Right ventricle myocardium inferior (tissue), 1 donor: ENCODE measurements at regions of chr5 and their contacts with region 1.

Region 1: DNA sequence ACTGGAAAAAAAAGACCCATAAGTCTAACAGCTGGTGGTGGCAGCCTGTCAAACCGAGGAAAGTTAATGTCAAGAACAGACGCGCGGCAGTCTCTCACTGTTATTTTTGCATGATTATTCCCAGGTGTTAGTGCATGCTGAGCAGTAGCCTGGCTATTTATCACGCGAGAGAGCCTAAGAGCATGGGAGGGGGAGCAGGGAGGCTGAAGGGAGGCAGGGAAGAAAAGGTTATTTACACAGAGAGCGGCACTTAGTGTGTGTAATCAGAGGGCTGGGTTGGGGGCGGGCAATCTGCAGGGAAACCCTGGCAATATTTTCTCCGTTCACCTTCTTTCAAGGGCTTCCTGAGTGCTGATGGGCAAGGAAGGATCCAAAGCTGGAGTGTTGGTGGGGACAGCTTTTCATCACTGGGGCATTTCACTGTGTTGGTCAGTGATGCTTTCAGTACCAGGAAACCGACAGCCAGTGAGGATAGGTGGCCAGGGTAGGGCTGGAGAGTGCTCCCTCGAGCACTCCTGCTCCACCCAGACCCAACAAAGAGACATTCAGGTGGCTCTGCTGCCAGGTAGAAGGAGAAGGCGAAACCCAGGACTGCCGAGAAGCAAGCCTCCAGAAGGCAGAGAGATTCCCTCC is 39.6 kb downstream of the ZNF608 start:
- DNase-seq: no peak
- ATAC-seq: peak; percentile 61

Region 2: GRCh38 chr5:124669956-124670721 is 36.7 kb before region 1 on chr5:
- intact Hi-C with region 1: loop called (anchors 5 kb)
- DNase-seq: no peak
- ATAC-seq: no peak